ENCODE measurements at regions of chr19 and their contacts with region 1.

Region 1: GRCh38 chr19:4909897-4910593 is 744 bp downstream of the UHRF1 start:
- DNase-seq: peak; percentile 91 to 93
- ATAC-seq: peak; percentile 93 to 98 (median 96)
- H3K4me3 ChIP-seq: peak overlapping the region; percentile 41 to 93 (median 69)
- H3K27ac ChIP-seq: peak overlapping the region in 1 of 10 donors; percentile 73
- H3K4me1 ChIP-seq: peaks cover 4 to 59% (median 25%) of the 10 kb centered on the region in 9 donors
- H3K27me3 ChIP-seq: peaks cover 0 to 11% (median 4%) of the 10 kb centered on the region in 7 donors
- CTCF ChIP-seq: no peak

Region 2: DNA sequence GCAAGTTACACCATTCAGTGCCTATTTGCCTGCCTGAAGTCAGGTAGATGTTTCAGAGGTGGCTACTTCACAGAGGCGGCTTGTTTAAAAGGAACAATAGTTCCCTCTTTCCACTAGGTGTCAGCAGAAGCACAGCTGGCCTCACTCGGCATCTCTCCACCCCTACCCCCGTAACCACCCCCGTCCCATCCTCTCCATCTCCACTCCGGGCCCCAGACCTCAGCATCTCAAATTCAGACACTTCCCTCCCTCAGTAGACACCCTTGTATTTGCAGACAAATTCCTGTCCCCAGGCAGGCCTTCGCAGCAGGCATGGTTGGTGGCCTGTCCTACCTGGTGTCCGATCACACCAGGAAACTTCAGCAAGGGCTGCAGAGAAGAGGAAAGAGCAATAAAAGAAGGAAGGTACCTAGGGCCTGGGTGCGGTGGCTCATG is 177.3 kb before region 1 on chr19:
- intact Hi-C with region 1: loop called in 1 of 10 experiments (anchors 5 kb)
- DNase-seq: peak in 1 of 2 donors; percentile 44
- ATAC-seq: peak; percentile 72 to 91 (median 86)
- H3K4me3 ChIP-seq: no peak overlapping the region
- H3K27ac ChIP-seq: no peak overlapping the region
- H3K4me1 ChIP-seq: peaks cover 0 to 8% (median 2%) of the 10 kb centered on the region in 9 donors
- H3K27me3 ChIP-seq: peaks cover 0 to 9% (median 0%) of the 10 kb centered on the region in 7 donors
- CTCF ChIP-seq: peak; percentile 51 to 83 (median 76)

Region 3: DNA sequence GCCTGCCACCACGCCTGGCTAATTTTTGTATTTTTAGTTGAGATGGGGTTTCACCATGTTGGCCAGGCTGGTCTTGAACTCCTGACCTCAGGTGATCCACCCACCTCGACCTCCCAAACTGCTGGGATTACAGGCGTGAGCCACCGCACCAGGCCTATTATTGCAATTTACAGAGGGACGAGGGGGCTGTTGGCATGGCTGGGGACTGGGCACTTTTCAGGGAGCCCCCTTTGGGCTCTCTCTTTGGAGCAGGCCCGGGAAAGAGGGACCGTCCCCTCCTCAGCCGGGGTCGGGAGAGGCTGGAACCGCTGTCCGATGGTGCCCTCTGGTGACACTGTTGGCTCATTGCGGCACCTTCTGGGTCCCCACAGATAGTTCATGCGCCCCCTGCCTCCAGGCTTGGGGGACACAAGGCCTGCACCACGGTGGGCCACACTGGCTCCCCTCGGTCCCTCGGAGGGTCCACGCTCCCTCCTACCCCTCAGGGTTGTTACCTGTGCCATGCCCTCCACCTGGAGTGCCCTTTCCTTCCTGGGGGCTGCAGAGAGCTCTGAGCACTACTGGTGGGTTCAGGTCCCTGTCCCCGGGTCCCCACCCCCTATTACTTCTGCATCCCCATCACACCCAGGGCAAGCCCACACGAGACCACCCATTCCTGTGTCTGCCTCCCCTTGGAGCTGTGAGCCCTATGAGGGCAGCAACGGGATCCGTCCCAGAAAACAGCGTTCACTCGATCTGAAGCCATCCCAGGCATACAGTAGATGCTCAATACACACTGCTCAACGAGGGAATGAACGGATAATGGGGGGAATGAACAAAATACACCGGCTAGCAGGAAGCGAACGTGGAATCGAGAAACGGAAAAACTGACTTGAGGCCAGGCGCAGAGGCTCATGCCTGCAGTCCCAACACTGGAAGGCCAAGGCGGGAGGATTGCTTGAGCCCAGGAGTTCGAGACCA is 106.0 kb before region 1 on chr19:
- intact Hi-C with region 1: loop called in 4 of 10 experiments (anchors 1 to 5 kb)
- DNase-seq: peak; percentile 55 to 69
- ATAC-seq: peak; percentile 50 to 78 (median 63)
- H3K4me3 ChIP-seq: no peak overlapping the region
- H3K27ac ChIP-seq: peak overlapping the region in 1 of 10 donors; percentile 80
- H3K4me1 ChIP-seq: peaks cover 0 to 34% (median 18%) of the 10 kb centered on the region in 9 donors
- H3K27me3 ChIP-seq: no peaks in the 10 kb centered on the region
- CTCF ChIP-seq: peak; percentile 61 to 89 (median 79)

Region 4: GRCh38 chr19:4815426-4816201 is 94.4 kb before region 1 on chr19:
- intact Hi-C with region 1: loop called in 5 of 10 experiments (anchors 2 to 5 kb)
- DNase-seq: peak; percentile 78 to 94
- ATAC-seq: peak; percentile 81 to 96 (median 94)
- H3K4me3 ChIP-seq: peak overlapping the region in 7 of 10 donors; percentile 9 to 42 (median 30)
- H3K27ac ChIP-seq: peak overlapping the region in 6 of 10 donors; percentile 36 to 82 (median 56)
- H3K4me1 ChIP-seq: peaks cover 6 to 43% (median 19%) of the 10 kb centered on the region in 9 donors
- H3K27me3 ChIP-seq: no peaks in the 10 kb centered on the region
- CTCF ChIP-seq: no peak

Region 5: DNA sequence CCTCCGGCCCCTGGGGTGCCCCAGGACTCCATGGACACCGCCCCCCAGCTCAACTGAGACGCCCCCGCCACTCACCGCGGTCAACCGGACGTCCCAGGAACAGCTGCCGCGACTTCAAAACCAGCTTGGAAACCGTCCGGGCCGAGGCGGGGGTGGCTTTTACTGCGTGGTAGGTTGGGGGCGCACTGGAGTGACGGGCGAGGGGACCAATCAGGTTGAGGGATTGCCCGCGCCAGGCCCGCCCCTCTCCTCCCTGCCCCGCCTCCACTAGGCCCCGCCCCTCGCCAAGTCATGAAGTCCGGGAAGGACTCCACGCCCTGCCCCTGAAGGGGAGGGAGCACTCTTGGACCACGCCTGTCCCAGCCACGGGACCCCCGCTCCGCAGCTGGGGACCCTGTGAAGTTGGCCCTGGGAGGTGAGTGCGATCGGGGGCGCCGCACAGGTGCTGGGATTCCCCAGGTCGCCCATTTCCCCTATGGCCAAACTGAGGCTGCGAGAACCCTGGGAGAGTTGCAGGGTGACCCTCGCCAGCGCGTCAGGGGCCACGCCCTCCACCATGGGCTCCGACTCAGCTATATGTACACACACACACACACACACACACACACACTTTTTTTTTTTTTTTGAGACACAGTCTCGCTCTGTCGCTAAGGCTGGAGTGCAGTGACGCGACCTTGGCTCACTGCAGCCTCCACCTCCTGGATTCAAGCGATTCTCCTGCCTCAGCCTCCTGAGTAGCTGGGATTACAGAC is 42.3 kb before region 1 on chr19 and contains the start of gene PLIN3:
- intact Hi-C with region 1: loop called (anchors 1 to 5 kb)
- DNase-seq: peak; percentile 98
- ATAC-seq: peak; percentile 97 to 99 (median 98)
- H3K4me3 ChIP-seq: peak within 1 kb of the TSS; percentile 70 to 99 (median 84)
- H3K27ac ChIP-seq: peak within 1 kb of the TSS in 9 of 10 donors; percentile 67 to 97 (median 87)
- H3K4me1 ChIP-seq: peaks cover 0 to 40% (median 8%) of the 10 kb centered on the region in 9 donors
- H3K27me3 ChIP-seq: no peaks in the 10 kb centered on the region
- CTCF ChIP-seq: no peak
- total RNA-seq, gene PLIN3: 16.3 to 52.9 (median 26.0) TPM

Region 6: DNA sequence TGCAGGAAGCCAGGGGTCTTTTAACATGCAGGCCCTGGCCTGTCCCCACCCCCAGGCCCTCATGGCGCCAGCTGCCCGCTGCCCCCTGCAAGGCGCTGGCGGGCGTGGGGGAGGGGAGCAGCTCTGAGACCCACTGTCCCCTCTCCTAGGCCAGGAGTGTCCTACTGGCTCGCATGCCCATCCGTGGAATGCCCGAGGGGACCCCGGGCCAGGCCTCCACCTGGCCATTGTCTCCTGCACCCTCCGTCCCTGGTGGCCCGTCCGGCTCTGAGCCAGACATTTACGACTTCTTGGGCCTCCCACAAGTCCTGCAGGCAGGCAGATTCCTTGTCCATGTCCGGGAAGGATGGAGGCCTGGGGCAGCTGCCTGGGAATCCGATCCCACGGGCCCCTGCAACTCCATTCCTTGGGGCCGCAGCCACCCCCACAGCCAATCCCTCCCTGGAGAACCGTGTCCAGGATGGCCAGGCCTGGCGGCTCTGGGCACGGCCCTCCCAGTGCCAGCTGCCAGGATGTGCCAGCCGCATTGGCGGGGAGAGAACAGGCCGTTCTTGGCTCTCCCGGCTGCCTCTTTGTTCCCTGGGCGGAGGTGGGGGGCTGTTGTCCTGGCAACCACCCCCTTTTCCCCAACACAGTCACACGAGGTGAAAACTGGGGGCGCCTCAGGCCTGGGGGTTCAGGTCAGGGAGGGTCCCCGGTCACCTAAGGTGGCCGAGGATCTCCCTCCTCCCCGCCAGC is 32.1 kb before region 1 on chr19:
- intact Hi-C with region 1: loop called in 6 of 10 experiments (anchors 2 to 5 kb)
- DNase-seq: peak in 1 of 2 donors; percentile 57
- ATAC-seq: peak; percentile 48 to 99 (median 91)
- H3K4me3 ChIP-seq: no peak overlapping the region
- H3K27ac ChIP-seq: peak overlapping the region; percentile 53 to 76 (median 70)
- H3K4me1 ChIP-seq: peaks cover 0 to 13% (median 6%) of the 10 kb centered on the region in 9 donors
- H3K27me3 ChIP-seq: peaks cover 0 to 12% (median 8%) of the 10 kb centered on the region in 7 donors
- CTCF ChIP-seq: no peak

Region 7: GRCh38 chr19:4939466-4939865 is 29.4 kb after region 1 on chr19:
- intact Hi-C with region 1: no loop called
- DNase-seq: no peak
- ATAC-seq: no peak
- H3K4me3 ChIP-seq: no peak overlapping the region
- H3K27ac ChIP-seq: no peak overlapping the region
- H3K4me1 ChIP-seq: no peaks in the 10 kb centered on the region
- H3K27me3 ChIP-seq: no peaks in the 10 kb centered on the region
- CTCF ChIP-seq: no peak

Region 8: DNA sequence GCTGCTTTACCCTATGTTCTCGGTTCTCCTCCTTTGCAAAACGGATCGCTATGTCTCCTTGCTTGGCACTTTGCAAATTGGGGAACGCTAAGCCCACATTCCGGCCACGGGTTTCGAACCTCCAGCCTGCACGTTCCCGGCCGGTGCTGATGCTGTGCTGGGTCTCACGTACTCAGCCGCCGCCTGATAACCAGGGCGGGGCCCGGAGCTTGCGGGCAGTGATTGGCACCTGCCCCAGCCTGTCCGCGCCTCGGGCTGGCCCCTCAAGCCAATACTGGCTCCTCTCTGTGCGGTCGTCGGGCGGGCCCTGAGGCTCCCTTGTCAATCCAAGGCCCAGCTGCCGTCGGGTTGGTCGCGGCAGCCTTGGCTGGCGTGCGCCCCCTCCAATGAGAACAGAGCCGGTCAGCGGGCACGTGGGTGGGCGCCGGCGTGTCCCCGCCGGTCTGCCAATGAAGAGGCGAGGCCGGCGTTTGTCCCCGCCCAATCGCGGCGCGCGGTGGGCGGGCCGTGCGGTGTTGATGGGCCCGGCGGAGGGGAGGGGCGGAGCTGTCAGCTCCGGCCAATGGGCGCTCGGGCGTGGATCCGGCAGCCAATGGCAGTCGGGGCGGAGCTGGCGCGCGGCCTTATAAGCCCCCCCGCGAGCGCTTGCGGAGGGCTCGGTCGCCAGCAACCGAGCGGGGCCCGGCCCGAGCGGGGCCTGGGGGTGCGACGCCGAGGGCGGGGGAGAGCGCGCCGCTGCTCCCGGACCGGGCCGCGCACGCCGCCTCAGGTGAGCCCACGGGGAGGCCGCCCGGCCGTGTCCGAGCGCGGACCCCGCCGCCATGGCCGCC is 58.6 kb after region 1 on chr19 and contains the start of gene KDM4B:
- intact Hi-C with region 1: loop called in 1 of 10 experiments (anchors 5 kb)
- DNase-seq: peak; percentile 99
- ATAC-seq: peak; percentile 96 to 98 (median 98)
- H3K4me3 ChIP-seq: peak within 1 kb of the TSS; percentile 24 to 76 (median 70)
- H3K27ac ChIP-seq: peak within 1 kb of the TSS; percentile 44 to 87 (median 72)
- H3K4me1 ChIP-seq: peaks cover 3 to 47% (median 35%) of the 10 kb centered on the region in 9 donors
- H3K27me3 ChIP-seq: no peaks in the 10 kb centered on the region
- CTCF ChIP-seq: no peak
- total RNA-seq, gene KDM4B: 21.4 to 35.8 (median 30.3) TPM

Region 9: GRCh38 chr19:5103061-5103701 is 193.1 kb after region 1 on chr19:
- intact Hi-C with region 1: no loop called
- DNase-seq: peak; percentile 63 to 70
- ATAC-seq: peak; percentile 64 to 88 (median 76)
- H3K4me3 ChIP-seq: no peak overlapping the region
- H3K27ac ChIP-seq: peak overlapping the region in 9 of 10 donors; percentile 17 to 82 (median 61)
- H3K4me1 ChIP-seq: peaks cover 6 to 58% (median 46%) of the 10 kb centered on the region in 9 donors
- H3K27me3 ChIP-seq: no peaks in the 10 kb centered on the region
- CTCF ChIP-seq: no peak